Activated T-helper 2 cell treated with anti-CD3 and anti-CD28 coated beads, Interferon-gamma antibody, Interleukin-2, Interleukin-4, amounts not matched to agents 10 μg/mL and 5 μg/mL and 100 μg/mL, durations not matched to agents 14 hours and 24 hours and 36 hours (primary cell): ENCODE measurements at regions of chr10 and their contacts with region 1.

Region 1: GRCh38 chr10:84447701-84448400 is 119.5 kb downstream of the CCSER2 start:
- DNase-seq: no peak
- H3K4me3 Mint-ChIP-seq: no peak overlapping the region
- H3K27ac Mint-ChIP-seq: no peak overlapping the region
- H3K4me1 Mint-ChIP-seq: no peaks in the 10 kb centered on the region
- H3K27me3 Mint-ChIP-seq: no peaks in the 10 kb centered on the region

Region 2: DNA sequence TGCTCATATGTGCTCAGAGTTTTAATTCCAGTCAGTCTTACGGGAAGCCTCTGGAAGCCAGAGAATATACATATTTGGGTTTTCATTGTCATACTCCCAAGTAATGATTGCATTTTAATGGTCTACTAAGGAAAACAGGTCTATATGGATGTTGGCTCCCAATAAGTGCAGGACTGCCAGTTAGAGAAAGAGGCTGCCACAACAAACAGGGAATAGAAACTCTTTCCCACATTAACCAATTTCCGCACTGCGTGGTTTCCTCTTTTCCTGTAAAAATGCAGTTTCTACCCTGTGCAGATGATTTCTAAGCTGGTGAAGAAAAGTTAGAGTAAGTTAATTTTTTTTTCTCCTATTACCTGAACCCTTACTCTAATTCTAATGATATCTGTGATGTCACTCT is 41.3 kb before region 1 on chr10:
- intact Hi-C with region 1: loop called (anchors 1 kb)
- DNase-seq: no peak
- H3K4me3 Mint-ChIP-seq: no peak overlapping the region
- H3K27ac Mint-ChIP-seq: no peak overlapping the region
- H3K4me1 Mint-ChIP-seq: peaks cover 19% of the 10 kb centered on the region
- H3K27me3 Mint-ChIP-seq: no peaks in the 10 kb centered on the region